CD8-positive, alpha-beta T cell (primary cell): ENCODE measurements at regions of chr9 and their contacts with region 1.

Region 1: GRCh38 chr9:77131399-77131798 is 45.9 kb upstream of the VPS13A start:
- DNase-seq: no peak
- ATAC-seq: no peak
- H3K4me3 ChIP-seq: no peak overlapping the region
- H3K4me3 Mint-ChIP-seq: no peak overlapping the region
- H3K27ac ChIP-seq: no peak overlapping the region
- H3K27ac Mint-ChIP-seq: no peak overlapping the region
- H3K4me1 ChIP-seq: no peaks in the 10 kb centered on the region
- H3K4me1 Mint-ChIP-seq: no peaks in the 10 kb centered on the region
- H3K27me3 ChIP-seq: no peaks in the 10 kb centered on the region
- H3K27me3 Mint-ChIP-seq: peaks cover 17% of the 10 kb centered on the region
- CTCF ChIP-seq: no peak

Region 2: DNA sequence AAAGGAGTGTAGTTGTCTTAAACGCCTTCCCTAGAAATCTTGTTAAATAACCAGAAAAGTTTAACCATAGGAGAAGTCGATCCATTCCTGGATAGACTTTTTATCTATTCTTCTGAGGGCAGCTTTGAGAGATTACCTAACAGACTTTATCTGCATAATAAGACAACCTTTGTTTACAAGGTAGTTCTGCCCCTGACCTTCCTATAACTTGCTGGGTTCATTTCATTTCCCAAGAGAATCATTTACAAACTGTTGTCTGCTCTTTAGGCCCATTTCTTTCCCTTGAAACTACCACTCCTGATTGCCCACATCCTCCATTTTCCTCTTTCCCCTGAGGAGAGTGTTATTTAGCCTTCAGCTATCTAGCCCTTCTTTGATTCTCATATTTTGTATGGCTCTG is 20.0 kb before region 1 on chr9:
- CTCF ChIA-PET with region 1: no interaction called
- POLR2A ChIA-PET with region 1: no interaction called
- intact Hi-C with region 1: loop called in 1 of 2 experiments (anchors 1 kb)
- DNase-seq: no peak
- ATAC-seq: no peak
- H3K4me3 ChIP-seq: no peak overlapping the region
- H3K4me3 Mint-ChIP-seq: no peak overlapping the region
- H3K27ac ChIP-seq: no peak overlapping the region
- H3K27ac Mint-ChIP-seq: no peak overlapping the region
- H3K4me1 ChIP-seq: no peaks in the 10 kb centered on the region
- H3K4me1 Mint-ChIP-seq: no peaks in the 10 kb centered on the region
- H3K27me3 ChIP-seq: no peaks in the 10 kb centered on the region
- H3K27me3 Mint-ChIP-seq: peaks cover 17% of the 10 kb centered on the region
- CTCF ChIP-seq: no peak